Esophagus muscularis mucosa (tissue), 4 donors: ENCODE measurements at regions of chr12 and their contacts with region 1.

Region 1: DNA sequence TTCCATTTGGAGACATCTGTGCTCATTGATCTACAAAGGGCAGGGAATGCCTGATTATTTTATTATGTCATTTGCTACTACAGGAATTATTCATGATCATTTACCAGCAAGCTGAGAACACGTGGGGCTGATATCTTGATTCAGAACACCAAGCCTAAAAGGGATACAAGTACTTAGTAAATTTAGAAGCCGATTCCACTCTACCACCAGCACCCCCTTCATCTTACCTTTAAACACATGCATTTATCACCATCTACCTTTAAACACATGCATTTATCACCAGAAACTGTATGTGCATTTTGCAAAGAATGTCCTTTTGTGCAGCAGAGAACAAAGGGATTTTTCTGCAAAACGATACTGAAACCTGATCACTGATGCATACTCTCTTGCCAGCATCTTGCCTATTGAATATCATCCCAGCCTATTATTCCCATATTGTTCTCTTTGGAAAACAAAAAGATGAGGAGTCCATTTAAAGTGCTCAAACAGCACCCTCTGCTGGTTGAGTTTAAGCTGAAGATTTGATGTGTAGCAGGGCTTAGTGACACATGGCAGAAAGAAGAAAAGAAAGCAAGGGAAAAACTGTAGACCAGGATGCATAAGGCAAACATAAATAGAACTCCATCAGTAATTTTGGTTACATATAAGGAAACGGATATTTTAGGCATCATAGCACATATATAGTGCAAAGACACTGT is 132.6 kb upstream of the PLEKHG7 start:
- DNase-seq: no peak
- H3K4me3 ChIP-seq: no peak overlapping the region
- H3K27ac ChIP-seq: no peak overlapping the region
- H3K4me1 ChIP-seq: peaks cover 0 to 8% (median 6%) of the 10 kb centered on the region in 4 donors
- H3K27me3 ChIP-seq: no peaks in the 10 kb centered on the region
- CTCF ChIP-seq: peak; percentile 73 to 77 (median 74)
- EP300 ChIP-seq: no peak
- POLR2A ChIP-seq: no peak

Region 2: GRCh38 chr12:91382081-91382543 is 1188.1 kb before region 1 on chr12:
- intact Hi-C with region 1: loop called (anchors 5 kb)
- DNase-seq: no peak
- H3K4me3 ChIP-seq: peak overlapping the region; percentile 42 to 58 (median 48)
- H3K27ac ChIP-seq: peak overlapping the region; percentile 35 to 59 (median 55)
- H3K4me1 ChIP-seq: peaks cover 0 to 7% (median 6%) of the 10 kb centered on the region in 4 donors
- H3K27me3 ChIP-seq: no peaks in the 10 kb centered on the region
- CTCF ChIP-seq: peak; percentile 77 to 83 (median 82)
- EP300 ChIP-seq: no peak
- POLR2A ChIP-seq: no peak

Region 3: GRCh38 chr12:91577586-91578539 is 992.3 kb before region 1 on chr12:
- intact Hi-C with region 1: loop called (anchors 10 kb)
- DNase-seq: no peak
- H3K4me3 ChIP-seq: peak overlapping the region in 3 of 4 donors; percentile 15 to 32 (median 23)
- H3K27ac ChIP-seq: no peak overlapping the region
- H3K4me1 ChIP-seq: peaks cover 0 to 19% (median 14%) of the 10 kb centered on the region in 4 donors
- H3K27me3 ChIP-seq: no peaks in the 10 kb centered on the region
- CTCF ChIP-seq: peak; percentile 61 to 74 (median 67)
- EP300 ChIP-seq: no peak
- POLR2A ChIP-seq: no peak

Region 4: DNA sequence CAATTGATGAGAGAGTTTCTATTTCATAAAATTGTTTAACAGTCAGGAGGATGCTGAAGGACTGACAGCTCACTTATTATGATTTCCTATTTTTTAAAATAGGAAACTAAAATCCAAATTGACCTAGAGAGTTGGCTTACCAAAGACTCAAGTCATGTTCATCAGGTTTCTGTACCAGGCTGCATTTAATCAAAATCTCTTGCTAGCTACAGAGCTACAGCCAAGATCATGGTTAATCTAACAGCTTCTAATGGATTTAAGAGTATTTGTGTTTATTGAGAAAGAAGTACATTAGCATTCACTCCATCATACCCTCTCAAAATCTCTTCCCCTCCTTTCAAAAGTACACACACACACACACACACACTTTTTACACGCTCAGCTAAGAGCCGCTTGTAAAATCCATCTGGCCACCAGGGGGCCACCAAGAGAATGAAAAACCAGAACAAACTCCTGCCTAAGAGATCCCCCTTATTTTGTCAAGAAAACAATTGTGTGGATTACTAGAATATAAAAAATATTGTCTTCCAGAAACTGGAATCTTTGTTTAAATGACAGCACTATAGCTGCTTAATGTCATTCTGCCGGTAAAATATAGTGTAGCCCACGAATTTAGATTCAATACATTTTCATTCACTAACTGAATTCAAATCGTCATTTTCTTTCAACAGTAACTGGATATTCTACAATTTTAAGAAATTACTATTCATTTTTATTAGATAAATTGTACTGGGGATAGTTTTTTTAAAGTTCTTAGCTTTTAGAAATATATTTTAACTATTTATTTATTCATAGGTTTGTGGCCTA is 758.5 kb before region 1 on chr12:
- intact Hi-C with region 1: loop called (anchors 5 kb)
- DNase-seq: no peak
- H3K4me3 ChIP-seq: no peak overlapping the region
- H3K27ac ChIP-seq: no peak overlapping the region
- H3K4me1 ChIP-seq: peaks cover 0 to 5% (median 0%) of the 10 kb centered on the region in 4 donors
- H3K27me3 ChIP-seq: no peaks in the 10 kb centered on the region
- CTCF ChIP-seq: peak; percentile 76 to 82 (median 80)
- EP300 ChIP-seq: no peak
- POLR2A ChIP-seq: no peak

Region 5: GRCh38 chr12:92145731-92146496 is 424.3 kb before region 1 on chr12 and contains the start of gene BTG1:
- intact Hi-C with region 1: loop called (anchors 5 kb)
- DNase-seq: peak; percentile 100
- H3K4me3 ChIP-seq: peak within 1 kb of the TSS; percentile 77 to 97 (median 91)
- H3K27ac ChIP-seq: peak within 1 kb of the TSS; percentile 99
- H3K4me1 ChIP-seq: peaks cover 0 to 14% (median 12%) of the 10 kb centered on the region in 4 donors
- H3K27me3 ChIP-seq: no peaks in the 10 kb centered on the region
- CTCF ChIP-seq: no peak
- EP300 ChIP-seq: no peak
- POLR2A ChIP-seq: peak; percentile 99
- total RNA-seq, gene BTG1: 40.6 to 66.4 (median 43.1) TPM